Activated CD4-positive, alpha-beta T cell treated with anti-CD3 and anti-CD28 coated beads, Interleukin-2, amount 10 ng/mL, durations not matched to agents 24 days and 14 days (primary cell): ENCODE measurements at regions of chr7 and their contacts with region 1.

Region 1: DNA sequence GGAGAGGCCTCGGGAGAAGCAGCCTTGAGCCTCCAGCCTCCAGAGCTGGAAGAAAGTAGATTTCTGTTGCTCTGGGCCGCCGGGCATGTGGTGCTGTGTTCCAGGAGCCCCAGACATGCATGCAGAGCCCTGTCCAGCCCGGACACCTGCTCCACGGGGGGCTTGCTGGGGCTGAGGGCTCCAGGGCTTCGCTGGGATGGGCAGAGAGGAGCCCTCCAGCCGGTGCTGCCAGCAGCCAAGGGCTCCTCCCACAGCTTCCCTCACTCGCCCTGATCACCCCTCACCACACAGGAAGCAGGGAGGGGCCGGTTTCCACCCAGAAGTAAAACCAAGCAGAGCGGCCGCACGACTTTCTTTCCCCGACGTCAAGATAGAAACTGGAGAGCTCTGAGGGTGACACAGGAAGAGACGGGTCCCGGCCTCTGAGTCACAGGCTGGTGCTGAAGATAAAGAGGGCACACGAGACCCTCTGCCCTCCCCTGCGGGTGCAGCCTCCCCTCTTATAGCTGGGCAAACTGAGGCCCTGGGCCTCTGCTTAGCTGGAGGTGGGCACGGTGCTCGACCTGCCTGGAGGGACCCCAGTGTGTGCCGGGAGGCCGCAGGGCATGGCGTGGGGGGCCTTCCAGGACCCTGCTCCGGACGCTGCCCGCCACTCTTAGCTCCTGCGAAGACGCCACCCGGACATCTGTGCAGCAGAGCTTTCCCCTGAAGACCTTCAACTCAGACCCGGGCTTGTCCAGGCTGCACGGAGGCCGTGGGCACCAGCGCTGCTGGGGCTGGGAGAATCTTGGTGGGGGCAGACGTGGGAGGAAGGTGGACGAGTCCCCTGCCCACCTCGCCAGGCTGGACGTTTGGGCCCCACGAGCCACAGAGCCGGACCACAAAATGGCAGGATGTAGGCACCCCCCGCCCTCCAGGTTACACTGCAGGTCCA is 31.1 kb downstream of the ADAP1 start:
- DNase-seq: peak; percentile 97
- H3K4me3 Mint-ChIP-seq: peak overlapping the region; percentile 87
- H3K27ac Mint-ChIP-seq: peak overlapping the region; percentile 96
- H3K4me1 Mint-ChIP-seq: peaks cover 34% of the 10 kb centered on the region
- H3K27me3 Mint-ChIP-seq: no peaks in the 10 kb centered on the region

Region 2: GRCh38 chr7:574661-575395 is 348.5 kb before region 1 on chr7:
- intact Hi-C with region 1: no loop called
- DNase-seq: no peak
- H3K4me3 Mint-ChIP-seq: no peak overlapping the region
- H3K27ac Mint-ChIP-seq: no peak overlapping the region
- H3K4me1 Mint-ChIP-seq: no peaks in the 10 kb centered on the region
- H3K27me3 Mint-ChIP-seq: no peaks in the 10 kb centered on the region

Region 3: DNA sequence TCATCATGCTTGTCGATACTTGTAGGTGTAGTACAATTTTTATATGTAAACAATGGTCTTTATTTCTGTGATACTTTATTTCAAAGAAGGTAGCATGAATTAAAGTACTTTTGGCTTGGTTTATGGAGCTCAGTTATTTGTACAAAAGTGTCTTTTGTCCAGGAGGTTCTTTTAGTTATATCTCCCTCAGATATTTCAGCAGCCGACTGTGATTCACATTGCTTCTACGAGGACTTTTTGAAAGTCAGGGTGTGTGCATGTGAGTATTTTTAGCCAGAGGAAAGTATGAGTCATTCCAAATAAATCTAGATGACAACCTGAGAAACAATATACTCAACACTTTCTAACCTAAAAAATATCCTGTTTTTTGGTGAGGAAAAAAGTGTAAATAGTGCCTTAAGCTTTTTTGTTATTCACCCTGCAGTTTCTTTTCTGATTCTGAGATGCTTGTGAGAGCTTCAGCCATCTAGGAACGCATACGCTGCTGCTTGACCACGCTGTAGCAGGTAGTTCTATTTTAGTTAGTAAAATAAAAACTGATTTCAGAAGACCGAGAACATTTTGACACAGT is 91.7 kb before region 1 on chr7:
- intact Hi-C with region 1: loop called (anchors 5 kb)
- DNase-seq: peak; percentile 73
- H3K4me3 Mint-ChIP-seq: peak overlapping the region; percentile 81
- H3K27ac Mint-ChIP-seq: peak overlapping the region; percentile 96
- H3K4me1 Mint-ChIP-seq: peaks cover 36% of the 10 kb centered on the region
- H3K27me3 Mint-ChIP-seq: no peaks in the 10 kb centered on the region

Region 4: DNA sequence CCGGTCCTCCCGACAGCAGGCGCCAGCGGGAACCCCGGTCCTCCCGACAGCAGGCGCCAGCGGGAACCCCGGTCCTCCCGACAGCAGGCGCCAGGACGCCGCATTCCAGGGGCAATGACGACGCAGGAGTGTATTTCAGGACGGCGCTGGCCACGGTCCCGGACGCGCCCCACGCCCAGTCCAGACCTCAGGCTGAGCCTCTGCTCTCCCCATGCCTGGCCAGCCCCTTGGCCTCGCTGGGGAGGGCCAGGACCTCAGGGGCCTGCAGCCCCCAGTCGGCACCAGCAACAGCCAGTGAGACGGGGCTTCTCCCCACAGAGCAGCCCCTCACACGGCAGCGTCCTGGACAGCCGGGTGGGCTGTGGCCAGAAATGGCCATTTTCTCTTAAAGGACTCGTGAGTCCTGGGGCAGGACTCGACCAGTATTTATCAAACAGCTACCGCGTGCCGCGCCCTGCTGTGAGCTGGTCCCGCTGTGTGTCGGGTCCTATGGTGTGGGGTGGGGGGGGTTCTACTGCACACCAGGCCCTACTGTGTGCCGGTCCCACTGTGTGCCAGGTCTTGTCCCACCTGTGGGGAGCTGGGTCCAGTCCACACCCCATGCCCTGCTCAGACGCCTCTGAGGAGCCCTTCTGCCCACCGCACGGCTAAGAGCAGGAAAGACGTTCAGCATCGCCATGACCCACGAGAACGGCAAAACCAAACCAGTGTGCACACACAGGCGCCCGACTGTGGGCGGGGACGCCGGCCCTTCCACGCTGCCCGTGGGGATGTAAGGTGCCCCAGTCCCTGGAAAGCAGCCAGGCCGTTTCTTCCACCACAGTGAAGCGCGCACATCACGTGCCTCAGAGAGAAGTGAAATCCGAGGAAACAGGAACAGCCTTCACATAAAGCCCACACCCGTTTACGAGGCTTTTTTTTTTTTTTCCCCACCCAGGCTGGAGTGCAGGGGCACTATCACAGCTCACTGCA is 13.7 kb before region 1 on chr7:
- intact Hi-C with region 1: loop called (anchors 2 kb)
- DNase-seq: no peak
- H3K4me3 Mint-ChIP-seq: no peak overlapping the region
- H3K27ac Mint-ChIP-seq: no peak overlapping the region
- H3K4me1 Mint-ChIP-seq: peaks cover 7% of the 10 kb centered on the region
- H3K27me3 Mint-ChIP-seq: peaks cover 2% of the 10 kb centered on the region

Region 5: DNA sequence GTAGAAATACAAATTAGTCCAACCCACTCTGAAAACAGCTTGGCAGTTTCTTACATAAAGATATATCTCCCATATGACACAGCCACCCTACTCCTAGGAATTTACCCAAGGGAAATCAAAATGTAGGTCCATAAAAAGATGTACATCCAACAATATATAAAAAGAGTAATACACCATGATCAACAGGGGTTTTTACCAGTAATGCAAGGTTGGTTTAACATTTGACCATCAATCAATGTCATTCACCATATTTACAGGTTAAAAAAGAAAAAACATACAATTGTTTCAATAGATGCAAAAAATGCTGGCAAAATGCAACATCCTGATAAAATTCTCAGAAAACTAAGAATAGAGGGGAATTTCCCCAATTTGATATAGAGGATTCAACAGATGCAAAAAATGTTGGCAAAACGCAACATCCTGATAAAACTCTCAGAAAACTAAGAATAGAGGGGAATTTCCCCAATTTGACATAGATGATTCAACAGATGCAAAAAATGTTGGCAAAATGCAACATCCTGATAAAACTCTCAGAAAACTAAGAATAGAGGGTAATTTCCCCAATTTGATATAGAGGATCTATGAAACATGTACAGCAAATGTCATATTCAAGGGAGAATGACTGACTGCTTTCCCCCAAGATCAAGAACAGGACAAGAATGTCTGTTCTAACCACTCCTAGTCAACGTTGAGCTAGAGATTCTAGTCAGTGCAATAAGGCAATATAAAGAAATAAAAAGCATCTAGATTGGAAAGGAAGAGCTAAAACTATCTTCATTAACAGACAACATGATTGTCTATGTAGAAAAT is 17.4 kb after region 1 on chr7:
- intact Hi-C with region 1: loop called (anchors 1 kb)
- DNase-seq: no peak
- H3K4me3 Mint-ChIP-seq: peak overlapping the region; percentile 46
- H3K27ac Mint-ChIP-seq: peak overlapping the region; percentile 92
- H3K4me1 Mint-ChIP-seq: peaks cover 22% of the 10 kb centered on the region
- H3K27me3 Mint-ChIP-seq: peaks cover 2% of the 10 kb centered on the region

Region 6: GRCh38 chr7:954330-955238 is 31.2 kb after region 1 on chr7 and contains the start of gene ADAP1:
- intact Hi-C with region 1: loop called (anchors 5 kb)
- DNase-seq: peak; percentile 88
- H3K4me3 Mint-ChIP-seq: peak within 1 kb of the TSS; percentile 74
- H3K27ac Mint-ChIP-seq: peak within 1 kb of the TSS; percentile 69
- H3K4me1 Mint-ChIP-seq: peaks cover 5% of the 10 kb centered on the region
- H3K27me3 Mint-ChIP-seq: peaks cover 8% of the 10 kb centered on the region
- total RNA-seq, gene ADAP1: 65.9 and 70.2 TPM in 2 replicates

Region 7: GRCh38 chr7:974820-975681 is 51.7 kb after region 1 on chr7 and contains the start of gene COX19:
- intact Hi-C with region 1: loop called (anchors 2 kb)
- DNase-seq: peak; percentile 96
- H3K4me3 Mint-ChIP-seq: peak within 1 kb of the TSS; percentile 95
- H3K27ac Mint-ChIP-seq: peak within 1 kb of the TSS; percentile 93
- H3K4me1 Mint-ChIP-seq: peaks cover 13% of the 10 kb centered on the region
- H3K27me3 Mint-ChIP-seq: no peaks in the 10 kb centered on the region
- total RNA-seq, gene COX19: 15.3 and 22.4 TPM in 2 replicates

Region 8: GRCh38 chr7:985915-986741 is 62.8 kb after region 1 on chr7:
- intact Hi-C with region 1: no loop called
- DNase-seq: no peak
- H3K4me3 Mint-ChIP-seq: no peak overlapping the region
- H3K27ac Mint-ChIP-seq: no peak overlapping the region
- H3K4me1 Mint-ChIP-seq: no peaks in the 10 kb centered on the region
- H3K27me3 Mint-ChIP-seq: no peaks in the 10 kb centered on the region

Region 9: GRCh38 chr7:1044191-1045068 is 121.1 kb after region 1 on chr7 and contains the start of gene GPR146:
- intact Hi-C with region 1: loop called (anchors 5 kb)
- DNase-seq: peak; percentile 97
- H3K4me3 Mint-ChIP-seq: peak within 1 kb of the TSS; percentile 89
- H3K27ac Mint-ChIP-seq: peak within 1 kb of the TSS; percentile 78
- H3K4me1 Mint-ChIP-seq: peaks cover 57% of the 10 kb centered on the region
- H3K27me3 Mint-ChIP-seq: no peaks in the 10 kb centered on the region
- total RNA-seq, gene GPR146: 2.5 and 4.1 TPM in 2 replicates

Region 10: DNA sequence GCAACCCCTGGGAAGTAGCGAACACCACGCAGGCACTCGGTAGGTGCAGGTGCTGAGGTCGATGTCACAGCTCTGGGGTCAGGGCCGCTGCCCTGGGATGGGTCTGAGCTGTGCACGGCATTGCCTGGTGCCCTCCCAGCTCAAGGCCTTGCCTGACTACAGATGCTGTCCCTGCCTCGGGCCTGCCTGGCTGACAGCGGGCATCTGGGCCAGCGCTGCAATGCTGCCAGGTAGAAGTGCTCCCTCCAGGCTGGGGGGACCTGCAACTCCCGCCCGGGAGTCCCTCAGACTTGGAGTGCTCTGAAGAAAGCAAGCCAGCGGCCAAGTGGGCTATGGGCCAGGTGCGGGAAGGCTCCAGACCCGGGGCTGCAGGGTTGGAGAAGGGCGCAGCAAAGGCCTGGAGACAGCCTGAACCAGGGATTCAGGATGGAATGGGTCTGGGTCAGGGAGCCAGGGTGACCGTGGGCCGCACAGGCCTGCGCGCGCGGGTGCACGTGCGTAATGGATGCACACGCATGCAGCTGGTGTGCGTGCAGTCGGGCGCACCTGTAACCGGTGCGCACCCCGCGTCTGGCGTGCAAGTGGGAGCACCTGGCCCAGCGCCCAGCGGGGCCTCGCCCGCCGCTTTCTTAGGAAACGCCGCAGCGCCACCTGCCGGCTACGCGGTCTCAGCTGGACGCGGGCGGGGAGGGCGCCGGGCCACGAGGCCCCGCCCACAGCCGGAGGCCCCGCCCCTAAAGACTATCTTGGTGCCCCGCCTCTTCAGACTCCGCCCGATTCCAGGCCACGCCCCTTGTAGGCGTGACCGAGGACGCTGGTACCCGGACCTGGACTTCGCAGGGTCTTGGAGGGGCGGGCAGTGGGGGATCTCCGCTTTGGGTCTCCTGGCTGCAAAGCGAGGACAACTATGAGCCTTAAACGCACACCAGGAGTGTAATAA is 489.2 kb after region 1 on chr7:
- intact Hi-C with region 1: no loop called
- DNase-seq: peak; percentile 95
- H3K4me3 Mint-ChIP-seq: no peak overlapping the region
- H3K27ac Mint-ChIP-seq: no peak overlapping the region
- H3K4me1 Mint-ChIP-seq: peaks cover 14% of the 10 kb centered on the region
- H3K27me3 Mint-ChIP-seq: peaks cover 7% of the 10 kb centered on the region